Heart left ventricle (tissue), 16 donors: ENCODE measurements at regions of chr9 and their contacts with region 1.

Region 1: DNA sequence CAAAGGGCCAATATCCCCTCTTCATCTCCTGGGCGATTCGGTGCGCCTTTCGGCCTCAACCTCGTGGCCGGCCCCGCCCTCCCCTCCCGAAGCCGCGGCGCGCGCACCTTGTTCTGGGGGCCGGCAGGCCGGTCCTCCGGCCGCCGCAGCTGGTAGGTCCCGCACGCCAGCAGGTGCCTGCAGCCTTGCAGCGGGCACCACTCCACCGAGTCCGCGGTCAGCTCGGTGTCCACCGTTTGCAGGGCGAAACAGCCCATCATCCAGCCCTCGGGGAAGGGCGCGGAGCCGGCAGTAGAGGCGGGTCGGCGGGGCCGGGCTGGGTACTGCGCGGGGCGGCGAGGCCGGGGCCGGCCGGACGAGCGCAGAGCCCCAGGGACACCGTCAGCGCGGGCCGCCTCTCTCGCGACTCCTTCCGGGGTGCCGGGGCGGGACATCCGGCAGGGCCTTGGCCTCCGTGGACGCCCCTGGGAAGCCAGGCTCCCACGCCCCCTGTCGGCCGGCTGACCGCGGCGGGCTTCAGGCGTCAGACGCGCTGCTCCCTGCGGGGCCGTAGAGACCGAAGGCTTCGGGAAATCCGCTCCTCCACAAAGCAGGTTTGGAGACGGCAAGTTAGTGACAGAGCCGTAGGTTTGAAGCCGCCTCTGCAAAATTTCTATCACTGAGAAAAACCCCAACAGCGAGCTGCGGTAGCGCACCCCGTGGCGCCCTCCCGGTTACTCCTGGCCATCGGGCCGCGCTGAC is at the start of gene DPH7:
- DNase-seq: peak; percentile 96 to 99 (median 97)
- ATAC-seq: peak; percentile 83 to 95 (median 93)
- H3K4me3 ChIP-seq: peak within 1 kb of the TSS; percentile 63 to 99 (median 82)
- H3K27ac ChIP-seq: peak within 1 kb of the TSS; percentile 51 to 91 (median 85)
- H3K4me1 ChIP-seq: peaks cover 7 to 59% (median 40%) of the 10 kb centered on the region in 12 donors
- H3K27me3 ChIP-seq: no peaks in the 10 kb centered on the region
- CTCF ChIP-seq: peak; percentile 91 to 99 (median 97)
- POLR2A ChIP-seq: peak in 1 of 2 donors; percentile 82
- total RNA-seq, gene DPH7: 12.6 to 22.0 (median 16.7) TPM

Region 2: DNA sequence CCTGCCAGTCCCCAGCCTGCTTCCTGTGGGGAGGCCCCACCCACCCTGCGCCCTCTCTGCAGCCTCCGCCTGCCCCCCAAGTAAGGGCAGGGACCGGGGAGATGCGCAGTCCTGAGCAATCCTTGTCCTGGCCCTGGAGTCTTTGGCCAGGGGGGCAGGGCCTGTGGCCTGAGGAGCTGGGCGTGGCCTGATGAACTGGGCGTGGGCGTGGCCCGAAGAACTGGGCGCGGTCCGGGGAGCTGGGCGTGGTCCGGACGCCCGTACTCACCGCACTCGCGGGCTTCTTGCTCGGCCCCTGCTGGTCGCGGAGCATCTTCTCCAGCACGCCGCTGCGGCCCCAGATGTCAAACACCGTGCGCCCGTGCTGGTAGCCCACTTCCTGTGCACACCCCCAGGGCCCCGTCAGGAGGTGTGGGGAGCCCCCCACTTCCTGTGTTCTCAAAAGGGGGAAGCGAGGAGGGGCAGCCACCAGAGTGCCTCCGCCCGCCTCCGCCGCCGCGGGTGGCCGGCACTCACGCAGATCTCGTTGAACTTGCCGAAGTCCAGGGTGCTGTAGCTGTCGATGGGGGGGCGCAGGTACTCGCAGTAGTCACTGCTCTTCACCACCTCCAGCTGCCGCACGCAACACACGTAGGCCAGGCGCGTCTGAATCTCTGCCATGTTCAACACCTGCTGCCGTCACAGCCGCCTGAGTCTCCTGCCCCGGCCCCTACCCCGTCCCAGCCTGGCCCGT is 116.9 kb before region 1 on chr9:
- intact Hi-C with region 1: no loop called
- DNase-seq: peak in 3 of 5 donors; percentile 47 to 85 (median 52)
- ATAC-seq: peak in 1 of 4 donors; percentile 5
- H3K4me3 ChIP-seq: peak overlapping the region in 1 of 12 donors; percentile 43
- H3K27ac ChIP-seq: peak overlapping the region in 1 of 12 donors; percentile 58
- H3K4me1 ChIP-seq: peaks cover 3 to 39% (median 14%) of the 10 kb centered on the region in 12 donors
- H3K27me3 ChIP-seq: peaks cover 0 to 7% (median 0%) of the 10 kb centered on the region in 9 donors
- CTCF ChIP-seq: no peak
- POLR2A ChIP-seq: no peak

Region 3: DNA sequence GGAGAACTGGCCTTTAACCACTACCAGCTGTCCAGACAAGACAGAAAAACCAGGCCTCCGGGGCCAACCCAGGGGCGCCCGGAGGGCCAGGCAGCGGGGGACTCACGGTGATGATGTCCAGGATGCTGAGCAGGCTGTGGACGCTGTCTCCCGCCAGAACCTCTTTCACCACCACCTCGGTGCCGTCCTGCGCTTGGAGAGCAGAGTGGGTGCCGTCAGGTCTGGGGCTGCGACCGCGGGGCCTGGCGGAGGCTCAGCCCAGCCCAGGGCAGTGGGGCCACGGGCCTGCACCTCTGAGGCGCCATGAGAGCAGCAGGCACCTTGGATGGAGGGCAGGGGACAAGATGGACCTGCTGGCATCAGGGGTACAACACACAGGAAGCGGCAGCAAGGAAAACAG is 38.2 kb before region 1 on chr9:
- intact Hi-C with region 1: no loop called
- DNase-seq: no peak
- ATAC-seq: no peak
- H3K4me3 ChIP-seq: no peak overlapping the region
- H3K27ac ChIP-seq: no peak overlapping the region
- H3K4me1 ChIP-seq: peaks cover 0 to 8% (median 0%) of the 10 kb centered on the region in 12 donors
- H3K27me3 ChIP-seq: no peaks in the 10 kb centered on the region
- CTCF ChIP-seq: no peak
- POLR2A ChIP-seq: no peak

Region 4: GRCh38 chr9:137551651-137552384 is 26.9 kb before region 1 on chr9 and contains the start of gene MRPL41:
- intact Hi-C with region 1: loop called in 1 of 10 experiments (anchors 2 kb)
- DNase-seq: peak; percentile 90 to 96 (median 94)
- ATAC-seq: peak; percentile 63 to 84 (median 77)
- H3K4me3 ChIP-seq: peak within 1 kb of the TSS; percentile 61 to 99 (median 81)
- H3K27ac ChIP-seq: peak within 1 kb of the TSS; percentile 84 to 99 (median 95)
- H3K4me1 ChIP-seq: peaks cover 0 to 35% (median 14%) of the 10 kb centered on the region in 12 donors
- H3K27me3 ChIP-seq: no peaks in the 10 kb centered on the region
- CTCF ChIP-seq: no peak
- POLR2A ChIP-seq: peak; percentile 96
- total RNA-seq, gene MRPL41: 118 to 389 (median 196) TPM

Region 5: GRCh38 chr9:137564817-137565411 is 13.8 kb before region 1 on chr9:
- intact Hi-C with region 1: no loop called
- DNase-seq: peak in 1 of 5 donors; percentile 47
- ATAC-seq: no peak
- H3K4me3 ChIP-seq: no peak overlapping the region
- H3K27ac ChIP-seq: no peak overlapping the region
- H3K4me1 ChIP-seq: no peaks in the 10 kb centered on the region
- H3K27me3 ChIP-seq: no peaks in the 10 kb centered on the region
- CTCF ChIP-seq: no peak
- POLR2A ChIP-seq: no peak

Region 6: DNA sequence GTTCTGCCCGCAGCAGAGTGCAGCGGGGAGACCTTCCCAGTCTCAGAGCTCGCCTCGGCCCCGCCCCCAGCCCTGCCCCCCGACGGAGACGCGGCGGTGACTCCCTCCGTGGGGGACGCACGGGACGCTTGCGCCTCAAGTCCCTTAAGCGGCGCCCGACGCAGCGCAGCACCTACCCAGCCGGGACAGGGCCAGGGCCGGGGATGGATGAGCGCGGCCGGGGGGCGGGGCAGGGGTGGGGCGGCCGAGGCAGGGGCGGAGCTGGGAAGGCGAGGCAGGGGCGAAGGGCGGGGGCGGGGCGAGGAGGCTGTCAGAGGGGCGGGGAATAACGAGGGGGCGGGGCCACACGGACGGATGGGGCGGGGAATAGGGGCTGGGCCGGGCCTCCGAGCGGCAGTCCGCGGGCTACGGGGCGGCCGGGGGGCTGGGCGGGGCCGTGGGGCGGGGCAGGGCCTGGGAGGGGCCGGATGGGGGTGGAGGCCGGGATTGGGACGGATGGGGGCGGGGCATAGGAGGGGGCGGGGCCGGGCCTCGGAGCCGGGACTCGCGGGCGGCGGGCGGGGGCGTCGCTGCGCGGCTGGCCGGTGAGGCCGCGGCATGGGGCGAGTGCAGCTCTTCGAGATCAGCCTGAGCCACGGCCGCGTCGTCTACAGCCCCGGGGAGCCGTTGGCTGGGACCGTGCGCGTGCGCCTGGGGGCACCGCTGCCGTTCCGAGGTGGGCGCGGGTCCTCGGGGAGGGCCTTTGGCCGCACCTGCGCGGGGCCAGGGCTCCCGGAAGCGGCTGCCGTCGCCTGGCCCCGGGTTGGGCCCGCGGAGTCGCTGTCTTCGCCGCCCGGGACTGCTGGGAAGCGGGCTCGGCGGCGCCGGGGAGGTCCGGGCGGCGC is 26.7 kb after region 1 on chr9 and contains the start of gene ARRDC1:
- intact Hi-C with region 1: loop called in 1 of 10 experiments (anchors 1 kb)
- DNase-seq: peak; percentile 93 to 96 (median 95)
- ATAC-seq: peak; percentile 81 to 90 (median 87)
- H3K4me3 ChIP-seq: peak within 1 kb of the TSS; percentile 61 to 91 (median 81)
- H3K27ac ChIP-seq: peak within 1 kb of the TSS; percentile 74 to 94 (median 90)
- H3K4me1 ChIP-seq: peaks cover 7 to 52% (median 23%) of the 10 kb centered on the region in 12 donors
- H3K27me3 ChIP-seq: no peaks in the 10 kb centered on the region
- CTCF ChIP-seq: no peak
- POLR2A ChIP-seq: peak in 1 of 2 donors; percentile 79
- total RNA-seq, gene ARRDC1: 14.1 to 43.6 (median 20.7) TPM

Region 7: DNA sequence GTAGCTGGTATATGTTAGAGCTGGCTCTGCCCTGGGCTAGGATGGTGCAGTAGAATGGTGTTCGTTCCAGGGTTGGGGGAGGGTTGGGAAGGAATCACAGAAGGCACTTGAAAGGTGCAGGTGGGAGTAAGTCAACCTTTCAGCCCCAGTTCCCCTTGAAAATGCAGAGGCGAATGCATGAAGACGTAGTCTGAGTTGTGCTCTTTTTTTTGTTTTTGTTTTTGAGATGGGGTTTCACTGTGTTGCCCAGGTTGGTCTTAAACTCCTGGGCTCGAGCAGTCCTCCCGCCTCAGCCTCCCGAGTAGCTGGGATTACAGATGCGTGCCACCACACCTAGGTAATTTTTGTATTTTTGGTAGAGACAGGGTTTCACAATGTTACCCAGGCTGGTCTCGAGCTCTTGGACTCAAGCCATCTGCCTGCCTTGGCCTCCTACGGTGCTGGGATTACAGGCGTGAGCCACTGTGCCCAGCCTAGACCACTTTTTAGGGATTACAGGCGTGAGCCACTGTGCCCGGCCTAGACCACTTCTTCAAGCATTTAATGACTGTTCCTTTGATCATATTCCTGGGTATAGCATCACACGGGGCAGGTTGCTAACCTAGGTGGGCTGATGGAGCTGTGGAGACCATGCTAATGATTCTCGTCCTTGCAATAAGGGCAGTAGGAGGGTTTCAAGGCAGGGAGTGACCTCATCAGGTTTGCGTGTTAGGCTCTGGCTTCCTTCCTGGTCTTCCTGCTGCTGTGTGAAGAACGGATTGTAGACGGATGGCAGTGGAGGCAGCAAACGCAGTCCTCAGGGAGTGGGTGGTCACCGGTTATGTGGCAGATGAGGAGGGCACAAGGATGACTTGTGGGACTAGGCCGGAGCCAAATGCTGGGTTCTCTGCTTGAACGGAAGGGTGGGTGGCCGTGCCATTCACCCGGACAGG is 53.8 kb after region 1 on chr9:
- intact Hi-C with region 1: no loop called
- DNase-seq: no peak
- ATAC-seq: peak; percentile 10 to 78 (median 76)
- H3K4me3 ChIP-seq: no peak overlapping the region
- H3K27ac ChIP-seq: peak overlapping the region in 5 of 12 donors; percentile 5 to 48 (median 34)
- H3K4me1 ChIP-seq: peaks cover 0 to 56% (median 35%) of the 10 kb centered on the region in 12 donors
- H3K27me3 ChIP-seq: no peaks in the 10 kb centered on the region
- CTCF ChIP-seq: no peak
- POLR2A ChIP-seq: no peak